Activated naive CD4-positive, alpha-beta T cell treated with anti-CD3 and anti-CD28 coated beads for 36 hours (primary cell): ENCODE measurements at regions of chr16 and their contacts with region 1.

Region 1: GRCh38 chr16:69754469-69755310 is at the start of gene NOB1:
- DNase-seq: peak; percentile 98
- H3K4me3 Mint-ChIP-seq: peak within 1 kb of the TSS; percentile 97
- H3K27ac Mint-ChIP-seq: peak within 1 kb of the TSS; percentile 97
- H3K4me1 Mint-ChIP-seq: peaks cover 22% of the 10 kb centered on the region
- H3K27me3 Mint-ChIP-seq: no peaks in the 10 kb centered on the region
- total RNA-seq, gene NOB1: 110 to 114 TPM

Region 2: DNA sequence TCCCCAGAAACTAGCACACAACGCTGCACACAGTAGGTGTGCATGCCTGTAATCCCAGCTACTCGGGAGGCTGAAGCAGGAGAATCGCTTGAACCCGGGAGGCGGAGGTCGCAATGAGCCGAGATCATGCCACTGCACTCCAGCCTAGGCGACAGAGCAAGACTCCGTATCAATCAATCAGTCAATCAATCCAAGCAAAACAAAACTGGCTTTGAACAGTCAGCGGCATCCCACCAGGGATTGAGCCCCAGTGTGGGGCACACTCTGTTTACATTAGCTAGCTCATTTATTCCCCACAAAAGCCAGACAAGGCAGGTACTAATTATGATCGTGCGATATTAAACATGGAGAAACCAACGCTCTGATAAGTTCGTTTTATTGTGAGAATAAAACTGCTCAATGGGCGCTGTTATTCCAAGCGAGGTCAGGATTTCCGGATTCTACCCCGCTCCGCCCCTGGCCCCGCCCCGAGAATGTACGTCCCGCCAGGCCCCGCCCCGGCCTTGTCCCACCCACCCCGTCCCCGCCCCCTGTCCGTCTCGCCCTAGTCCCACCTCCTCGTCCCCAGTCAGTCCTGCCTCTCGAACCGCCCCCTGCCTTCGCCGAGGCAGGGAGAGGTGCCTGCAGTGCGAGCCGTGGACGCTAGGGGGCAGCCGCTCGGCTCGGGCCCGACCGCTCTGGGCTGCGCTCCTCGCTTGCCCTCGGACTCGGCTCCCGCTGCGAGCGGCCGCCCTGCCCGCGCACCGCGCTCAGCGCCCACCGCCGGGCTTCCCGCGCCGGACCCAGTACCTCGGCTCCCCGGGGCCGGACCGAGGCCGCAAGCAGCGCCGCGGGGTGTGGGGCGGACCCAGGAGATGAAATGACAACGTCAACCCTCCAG is 443.8 kb before region 1 on chr16 and contains the start of gene VPS4A:
- CTCF ChIA-PET with region 1: no interaction called
- intact Hi-C with region 1: loop called (anchors 1 kb)
- DNase-seq: peak; percentile 98
- H3K4me3 Mint-ChIP-seq: peak within 1 kb of the TSS; percentile 94
- H3K27ac Mint-ChIP-seq: peak within 1 kb of the TSS; percentile 84
- H3K4me1 Mint-ChIP-seq: peaks cover 31% of the 10 kb centered on the region
- H3K27me3 Mint-ChIP-seq: no peaks in the 10 kb centered on the region
- total RNA-seq, gene VPS4A: 34.3 to 35.8 TPM

Region 3: DNA sequence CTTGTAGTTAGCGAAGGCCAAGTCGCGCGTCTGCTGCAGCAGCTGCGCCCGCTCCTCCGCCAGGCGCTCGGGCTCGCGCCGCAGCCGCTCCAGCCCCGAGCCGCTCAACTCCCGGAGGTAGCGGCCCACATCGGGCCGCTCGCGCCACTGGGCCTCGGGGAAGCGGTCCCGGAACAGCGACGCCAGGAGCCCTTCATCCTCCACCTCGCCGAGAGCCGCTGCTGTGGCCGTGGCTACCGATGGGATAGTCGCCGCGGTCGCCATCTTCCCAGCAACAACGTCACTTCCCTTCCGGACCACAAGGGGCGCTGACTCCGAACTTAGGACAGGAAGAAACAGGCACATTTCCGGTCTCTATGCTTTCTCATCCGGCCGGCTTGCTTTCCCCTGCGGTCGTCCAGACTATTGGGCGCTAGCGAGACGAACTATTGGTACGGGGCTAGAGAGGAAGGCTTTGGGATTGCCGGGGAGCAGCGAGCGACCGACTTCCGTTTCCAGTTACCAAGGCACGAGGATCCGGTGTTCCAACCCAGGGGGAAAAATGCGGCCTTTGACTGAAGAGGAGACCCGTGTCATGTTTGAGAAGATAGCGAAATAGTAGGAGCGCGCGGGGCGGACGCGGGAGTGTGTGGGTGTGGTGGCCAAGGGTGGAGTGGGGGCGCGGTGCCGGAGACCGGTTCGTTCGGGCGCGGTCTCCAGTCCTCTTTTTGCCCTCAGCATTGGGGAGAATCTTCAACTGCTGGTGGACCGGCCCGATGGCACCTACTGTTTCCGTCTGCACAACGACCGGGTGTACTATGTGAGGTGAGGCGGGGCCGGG is 415.2 kb before region 1 on chr16 and contains the starts of genes COG8 and NIP7:
- CTCF ChIA-PET with region 1: interaction called, 8 read pairs
- intact Hi-C with region 1: loop called (anchors 2 kb)
- DNase-seq: peak; percentile 96
- H3K4me3 Mint-ChIP-seq: peak within 1 kb of the TSS; percentile 98
- H3K27ac Mint-ChIP-seq: peak within 1 kb of the TSS; percentile 95
- H3K4me1 Mint-ChIP-seq: peaks cover 53% of the 10 kb centered on the region
- H3K27me3 Mint-ChIP-seq: no peaks in the 10 kb centered on the region
- total RNA-seq, gene COG8: 21.0 to 22.6 TPM
- total RNA-seq, gene NIP7: 35.3 to 36.8 TPM

Region 4: DNA sequence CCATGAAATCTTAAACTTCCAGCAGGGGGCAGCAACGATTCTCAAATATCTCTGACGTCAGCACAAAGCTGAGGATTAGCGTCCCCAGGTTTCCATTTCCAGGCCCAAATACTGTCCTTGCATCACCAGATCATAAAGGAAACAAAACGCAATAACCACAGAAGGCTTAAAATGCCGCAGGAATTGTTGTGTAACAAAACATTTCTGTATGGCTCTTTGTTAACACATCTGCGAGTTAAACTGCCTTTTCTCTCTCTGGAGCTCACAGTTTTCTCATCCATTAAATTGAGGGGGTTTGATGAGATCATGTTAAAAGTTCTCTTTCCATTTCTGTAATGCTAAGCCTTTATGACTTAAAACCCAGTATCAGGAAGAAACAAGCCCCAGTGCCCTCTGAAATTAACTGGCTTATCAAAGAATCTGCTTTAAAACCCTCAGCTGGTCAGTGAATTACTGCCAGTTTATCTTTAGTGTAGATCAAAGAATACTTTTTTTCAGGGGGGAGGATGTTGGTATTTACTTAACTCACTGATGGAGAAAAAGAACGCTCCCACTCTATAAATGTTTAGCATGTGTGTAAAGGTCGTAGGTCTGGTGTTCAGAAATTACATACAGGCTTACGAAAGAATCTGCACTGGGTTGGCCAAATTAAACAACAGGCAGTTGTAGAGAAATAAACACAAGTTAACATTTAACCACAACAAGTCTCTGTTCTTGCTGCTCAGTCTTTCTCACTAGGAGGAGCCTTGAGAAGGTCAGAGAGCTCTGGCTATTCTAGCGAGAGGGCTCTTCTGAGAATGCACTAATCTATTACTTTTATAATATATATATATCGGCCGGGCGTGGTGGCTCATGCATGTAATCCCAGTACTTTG is 358.3 kb before region 1 on chr16:
- CTCF ChIA-PET with region 1: interaction called, 18 read pairs
- intact Hi-C with region 1: loop called (anchors 1 kb)
- DNase-seq: peak; percentile 87
- H3K4me3 Mint-ChIP-seq: no peak overlapping the region
- H3K27ac Mint-ChIP-seq: peak overlapping the region; percentile 62
- H3K4me1 Mint-ChIP-seq: peaks cover 20% of the 10 kb centered on the region
- H3K27me3 Mint-ChIP-seq: peaks cover 4% of the 10 kb centered on the region

Region 5: DNA sequence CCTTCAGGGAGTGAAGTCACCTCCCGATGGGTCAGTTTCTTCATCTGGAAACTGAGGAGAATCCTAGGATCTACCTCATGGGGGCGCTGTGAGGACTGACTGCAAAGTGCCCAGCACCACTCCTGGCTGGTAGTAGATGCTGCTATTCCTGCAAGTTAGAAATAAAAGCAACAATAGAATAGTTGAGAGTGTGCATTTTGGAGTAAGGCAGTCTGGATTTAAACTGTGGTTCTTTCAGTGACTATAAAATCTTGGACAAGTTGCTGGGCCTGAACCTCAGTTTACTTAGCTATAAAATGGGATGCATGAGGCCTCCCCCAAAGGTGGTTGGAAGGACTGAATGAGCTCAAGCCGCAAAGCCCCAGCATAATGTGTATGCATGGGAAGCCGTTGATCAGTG is 259.7 kb before region 1 on chr16:
- CTCF ChIA-PET with region 1: no interaction called
- intact Hi-C with region 1: loop called (anchors 10 kb)
- DNase-seq: peak; percentile 82
- H3K4me3 Mint-ChIP-seq: no peak overlapping the region
- H3K27ac Mint-ChIP-seq: no peak overlapping the region
- H3K4me1 Mint-ChIP-seq: no peaks in the 10 kb centered on the region
- H3K27me3 Mint-ChIP-seq: no peaks in the 10 kb centered on the region

Region 6: GRCh38 chr16:69709456-69710084 is 45.1 kb before region 1 on chr16:
- CTCF ChIA-PET with region 1: interaction called, 58 read pairs
- intact Hi-C with region 1: loop called (anchors 1 kb)
- DNase-seq: no peak
- H3K4me3 Mint-ChIP-seq: no peak overlapping the region
- H3K27ac Mint-ChIP-seq: no peak overlapping the region
- H3K4me1 Mint-ChIP-seq: peaks cover 8% of the 10 kb centered on the region
- H3K27me3 Mint-ChIP-seq: no peaks in the 10 kb centered on the region

Region 7: DNA sequence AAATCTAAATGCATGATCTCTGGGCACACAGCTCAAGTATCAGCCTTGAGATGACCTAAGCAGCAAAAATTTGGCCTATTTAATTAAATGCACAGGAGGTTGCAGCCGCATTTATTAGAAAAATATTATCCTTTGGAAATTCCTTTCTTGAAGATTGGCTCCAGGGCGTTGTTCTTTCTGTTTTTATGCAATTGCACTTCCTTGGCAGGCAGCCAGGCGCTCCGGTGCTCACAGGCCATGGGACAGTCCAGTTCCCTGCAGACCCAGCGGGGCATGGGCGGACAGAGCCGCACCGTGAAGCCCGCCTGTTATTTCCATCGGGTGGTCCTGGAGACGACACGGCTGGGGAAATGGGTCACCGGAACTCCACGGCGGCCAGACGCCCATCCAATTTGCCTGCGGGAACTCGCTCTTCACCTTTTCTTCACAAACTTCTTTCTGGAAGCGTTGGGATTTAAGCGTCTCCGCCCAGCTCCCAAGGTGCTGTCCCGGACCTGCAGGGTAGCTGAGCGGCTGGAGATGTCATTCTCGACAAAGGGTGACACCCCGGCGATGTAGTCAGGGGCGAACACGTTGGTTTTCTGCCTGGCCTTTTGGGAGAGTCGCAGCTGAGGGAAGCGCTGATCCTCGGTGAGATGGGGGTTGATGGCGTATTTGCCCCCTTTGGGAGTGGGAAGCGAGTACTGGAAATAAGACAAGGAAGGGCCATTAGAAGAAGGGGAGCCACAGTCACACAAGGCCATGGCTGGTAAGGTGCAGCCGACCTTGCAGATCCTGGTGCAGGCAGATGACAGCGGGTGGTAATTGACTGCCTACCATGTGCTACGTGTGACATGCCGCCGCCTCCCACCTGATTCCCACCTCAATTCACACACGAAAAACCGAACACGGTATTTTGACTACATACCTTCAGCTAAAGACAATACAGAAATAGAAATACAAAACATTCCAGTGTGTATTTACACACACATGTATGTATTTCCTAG is 12.5 kb before region 1 on chr16:
- CTCF ChIA-PET with region 1: interaction called, 12 read pairs
- intact Hi-C with region 1: no loop called
- DNase-seq: no peak
- H3K4me3 Mint-ChIP-seq: no peak overlapping the region
- H3K27ac Mint-ChIP-seq: no peak overlapping the region
- H3K4me1 Mint-ChIP-seq: peaks cover 6% of the 10 kb centered on the region
- H3K27me3 Mint-ChIP-seq: no peaks in the 10 kb centered on the region